GM10248 (cell line): ENCODE measurements at regions of chr2 and their contacts with region 1.

Region 1: DNA sequence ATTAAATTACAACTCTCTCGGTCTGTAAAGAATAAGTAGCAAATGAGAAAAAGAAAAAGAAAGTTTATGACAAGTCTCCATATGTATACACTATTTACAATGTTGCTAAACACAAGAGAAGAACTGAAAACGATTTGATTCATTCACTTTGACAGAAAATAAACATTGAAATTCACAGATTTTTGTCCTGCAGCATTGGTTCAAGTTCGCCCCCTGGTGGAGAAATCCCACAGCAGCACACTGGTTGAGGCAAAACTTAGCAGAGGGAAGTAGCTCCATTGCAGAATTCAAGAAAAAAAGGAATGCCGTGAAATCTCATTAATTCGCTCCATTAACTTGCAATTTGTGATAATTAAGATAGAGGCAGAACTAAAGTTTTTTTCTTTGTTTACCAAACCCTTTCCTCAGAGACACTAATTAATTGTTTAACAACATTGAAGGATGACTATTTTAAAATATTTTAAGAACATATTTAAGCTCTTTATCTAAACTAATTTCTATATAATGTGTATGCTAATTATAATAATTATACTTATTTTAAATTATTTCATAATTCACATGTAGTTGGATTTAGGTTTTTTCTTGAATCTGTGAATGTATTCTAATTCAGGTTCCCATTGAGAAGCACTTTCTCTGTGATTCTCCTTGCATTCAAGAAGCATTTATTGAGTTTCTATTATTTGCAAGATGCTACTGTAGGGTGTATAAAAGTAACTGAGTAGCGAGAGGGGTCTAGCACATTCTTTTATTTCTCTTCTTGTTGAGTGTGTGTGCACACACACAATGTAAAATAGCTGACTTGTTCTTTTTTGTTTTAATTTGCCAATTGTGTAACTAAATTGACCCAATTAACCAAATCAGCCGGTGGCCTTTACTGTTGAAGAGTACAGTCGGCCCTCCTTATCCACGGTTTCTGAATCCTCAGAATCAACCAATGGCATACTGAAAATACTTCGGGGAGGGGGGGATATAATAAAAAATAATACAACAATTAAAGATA is 74.1 kb downstream of the COL4A3 start:
- DNase-seq: peak; percentile 50
- CTCF ChIP-seq: peak; percentile 93

Region 2: DNA sequence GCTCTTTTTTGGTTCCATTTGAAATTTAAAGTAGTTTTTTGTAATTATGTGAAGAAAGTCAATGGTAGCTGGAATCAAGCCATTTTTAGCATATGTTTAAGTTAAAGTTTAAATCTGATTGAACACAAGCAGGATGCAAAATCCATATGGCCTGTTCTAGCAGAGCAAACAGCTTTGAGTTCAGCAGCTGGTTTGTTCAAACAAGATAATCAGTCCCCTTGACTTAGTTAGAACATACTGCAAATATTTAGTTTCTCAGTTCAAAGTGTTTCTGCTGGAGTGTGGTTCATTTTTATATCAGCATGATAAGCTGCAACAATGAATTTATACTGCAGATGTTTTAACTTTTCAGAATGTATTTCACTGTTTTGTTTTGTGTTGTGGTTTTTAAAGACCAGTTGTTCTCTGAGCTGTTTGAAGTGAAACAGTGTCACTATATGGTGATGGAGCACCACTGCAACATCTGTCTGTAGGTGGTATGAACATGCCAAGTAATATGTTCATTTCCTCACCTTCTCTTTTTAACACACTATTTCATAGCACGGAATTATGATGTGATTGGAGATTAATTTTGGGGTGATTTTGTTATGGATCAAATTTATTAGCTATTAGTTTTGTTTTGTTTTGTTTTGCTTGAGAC is 199.9 kb before region 1 on chr2:
- CTCF ChIA-PET with region 1: no interaction called
- POLR2A ChIA-PET with region 1: no interaction called
- DNase-seq: no peak
- CTCF ChIP-seq: no peak

Region 3: DNA sequence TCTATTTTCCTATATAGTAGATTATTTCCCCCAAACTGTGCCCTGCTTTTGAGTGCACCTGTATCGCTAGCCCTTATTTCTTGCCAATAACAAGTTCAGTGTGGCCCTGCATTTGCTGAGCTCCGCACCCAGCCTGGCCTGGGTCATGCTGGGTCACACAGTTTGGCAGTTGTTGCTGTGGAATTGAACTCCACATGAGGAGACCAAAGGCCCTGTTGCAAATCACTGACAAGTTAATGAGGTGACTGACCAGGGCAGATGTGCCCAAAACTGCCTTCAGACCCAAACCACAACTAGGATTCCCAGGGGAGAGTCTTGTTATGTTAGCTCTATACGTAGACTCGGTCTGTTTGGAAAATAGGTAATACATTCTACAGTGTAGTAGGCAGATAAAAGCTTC is 105.6 kb before region 1 on chr2:
- CTCF ChIA-PET with region 1: interaction called, 117 read pairs
- POLR2A ChIA-PET with region 1: interaction called, 3 read pairs
- DNase-seq: no peak
- CTCF ChIP-seq: no peak

Region 4: DNA sequence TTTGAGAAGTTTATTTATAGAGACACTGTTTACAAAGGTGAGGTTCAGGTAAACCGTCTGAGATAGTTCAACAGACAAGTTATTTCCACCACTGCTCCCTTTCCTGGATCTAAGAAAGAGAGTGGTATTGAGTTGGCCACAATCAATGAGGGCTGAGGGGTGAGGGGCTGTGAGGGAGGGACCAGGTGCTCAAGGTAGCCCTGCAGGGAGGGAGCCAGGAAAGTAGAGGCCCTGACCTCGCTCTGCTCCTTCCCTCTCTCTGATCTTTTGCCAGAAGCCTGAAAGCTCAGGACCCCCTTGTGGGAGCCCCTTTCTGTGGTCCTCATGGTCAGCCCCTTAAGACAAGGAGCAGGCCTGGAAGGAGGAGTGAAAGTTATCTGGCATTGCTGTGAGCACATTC is 44.3 kb before region 1 on chr2:
- CTCF ChIA-PET with region 1: interaction called, 10 read pairs
- POLR2A ChIA-PET with region 1: no interaction called
- DNase-seq: no peak
- CTCF ChIP-seq: no peak

Region 5: DNA sequence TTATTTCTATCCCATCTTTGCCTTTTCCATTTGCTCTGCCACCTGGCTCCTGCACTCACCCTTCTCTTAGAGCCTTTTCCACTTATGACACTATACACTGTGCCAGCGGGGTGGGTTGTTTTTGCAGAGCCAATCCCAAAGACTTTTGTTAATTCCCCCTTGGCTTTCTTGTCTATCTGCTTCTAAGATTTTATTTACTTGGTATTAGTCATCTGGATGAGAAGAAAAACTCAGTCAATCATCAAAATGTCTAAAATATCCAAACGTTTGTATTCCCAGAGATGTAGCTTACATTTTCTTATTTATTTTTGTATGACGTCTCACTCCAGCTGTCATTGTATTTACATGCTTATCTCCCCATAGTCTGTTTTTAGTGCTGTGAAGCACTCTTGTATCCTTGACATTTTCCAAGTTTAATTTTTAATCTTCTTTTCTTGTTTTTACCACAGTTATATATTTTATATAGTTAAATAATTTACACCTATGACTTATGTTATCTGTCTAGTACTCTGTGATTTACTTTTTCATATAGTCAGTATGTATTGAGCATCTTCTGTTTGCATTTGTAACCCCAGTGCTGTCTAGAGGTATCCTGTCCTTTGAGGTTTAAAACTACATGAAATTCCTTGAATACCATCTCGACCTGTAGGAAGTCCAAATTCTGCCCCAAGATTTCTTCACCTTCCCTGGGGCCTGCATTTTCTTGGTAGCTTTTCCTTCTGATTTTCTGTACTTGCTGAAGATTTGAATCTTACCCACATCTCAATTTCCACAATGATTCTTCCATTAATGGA is 19.0 kb before region 1 on chr2:
- CTCF ChIA-PET with region 1: interaction called, 14 read pairs
- POLR2A ChIA-PET with region 1: no interaction called
- DNase-seq: no peak
- CTCF ChIP-seq: no peak

Region 6: GRCh38 chr2:227248876-227249275 is 10.3 kb after region 1 on chr2:
- CTCF ChIA-PET with region 1: interaction called, 74 read pairs
- POLR2A ChIA-PET with region 1: no interaction called
- DNase-seq: no peak
- CTCF ChIP-seq: no peak

Region 7: GRCh38 chr2:227267410-227268148 is 29.0 kb after region 1 on chr2:
- CTCF ChIA-PET with region 1: interaction called, 10 read pairs
- POLR2A ChIA-PET with region 1: no interaction called
- DNase-seq: no peak
- CTCF ChIP-seq: no peak

Region 8: GRCh38 chr2:227766373-227766883 is 527.9 kb after region 1 on chr2:
- CTCF ChIA-PET with region 1: interaction called, 19 read pairs
- POLR2A ChIA-PET with region 1: no interaction called
- DNase-seq: peak; percentile 79
- CTCF ChIP-seq: peak; percentile 89